ENCODE measurements at regions of chr14 and their contacts with region 1.

Region 1: DNA sequence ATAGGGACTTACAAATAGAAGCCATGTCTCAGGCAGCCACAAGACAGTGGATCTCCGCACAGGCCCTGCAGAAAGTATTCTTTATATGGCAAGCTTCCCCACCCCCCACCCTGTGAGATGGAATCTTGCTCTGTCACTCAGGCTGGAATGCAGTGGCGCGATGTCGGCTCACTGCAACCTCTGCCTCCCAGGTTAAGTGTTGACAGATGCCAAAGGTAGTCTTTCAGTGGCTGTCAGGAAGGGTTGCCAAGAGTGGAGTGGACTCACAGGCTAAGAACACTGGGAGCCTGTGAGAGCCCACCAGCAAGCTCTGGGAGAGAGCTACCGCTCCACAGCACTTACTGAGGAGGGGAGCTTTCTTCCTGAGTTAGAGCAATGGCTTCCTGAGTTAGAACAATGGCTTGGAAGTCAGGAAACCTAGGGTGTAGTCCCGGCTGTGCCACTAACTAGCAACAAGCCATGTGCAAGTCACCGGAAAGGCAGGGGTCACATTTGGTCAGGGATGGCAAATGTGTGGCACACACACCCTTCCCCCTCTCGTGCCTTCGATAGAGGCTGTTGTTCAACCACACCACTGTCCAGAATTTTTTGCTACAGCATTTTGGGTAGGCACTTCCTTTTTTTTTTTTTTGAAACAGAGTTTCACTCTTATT is 2.6 kb downstream of the RNASE1 start:
- H3K4me3 Mint-ChIP-seq: peak overlapping the region; percentile 87
- H3K27ac Mint-ChIP-seq: peak overlapping the region; percentile 93
- H3K4me1 Mint-ChIP-seq: peaks cover 74% of the 10 kb centered on the region
- H3K27me3 Mint-ChIP-seq: no peaks in the 10 kb centered on the region

Region 2: GRCh38 chr14:20841122-20841521 is 41.1 kb after region 1 on chr14:
- intact Hi-C with region 1: loop called (anchors 5 kb)
- H3K4me3 Mint-ChIP-seq: no peak overlapping the region
- H3K27ac Mint-ChIP-seq: no peak overlapping the region
- H3K4me1 Mint-ChIP-seq: peaks cover 38% of the 10 kb centered on the region
- H3K27me3 Mint-ChIP-seq: no peaks in the 10 kb centered on the region

Measured in dendritic cell treated with granulocyte-macrophage colony-stimulating factor and Interleukin-4, amounts not matched to agents 40 ng/mL and 50 ng/mL, for 4 days (primary cell).